ENCODE measurements at regions of chr21 and their contacts with region 1.

Region 1: DNA sequence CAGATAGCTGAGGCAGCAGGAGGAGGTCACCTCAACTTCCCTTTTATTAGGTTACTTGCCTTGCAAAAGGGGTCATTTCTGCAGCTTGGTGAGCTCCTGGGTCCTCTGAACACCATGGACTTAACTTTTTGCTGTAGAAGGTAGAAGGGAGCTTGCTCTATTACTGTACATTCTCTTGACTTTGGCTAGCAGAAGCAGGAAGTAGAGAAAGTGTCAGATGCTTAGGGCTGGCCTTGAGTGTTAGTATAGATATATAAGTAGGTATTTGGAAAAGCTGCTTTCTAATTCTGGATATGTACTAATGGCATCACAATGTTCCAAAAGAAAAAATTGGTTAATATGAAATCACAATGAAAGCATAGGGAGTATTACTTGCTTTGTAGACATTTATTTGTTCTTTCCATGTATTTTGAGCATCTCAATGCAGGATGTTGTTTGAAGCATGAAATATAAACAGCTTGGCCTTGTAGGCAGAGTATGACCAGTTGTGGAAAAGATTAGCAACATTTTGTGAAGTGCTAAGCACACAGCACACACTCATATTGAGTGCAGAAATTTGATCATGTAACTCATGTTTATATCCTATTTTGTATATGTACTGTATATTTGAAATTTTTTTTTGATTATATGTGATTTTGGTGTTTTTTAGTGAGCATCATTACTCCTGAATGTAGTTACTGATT is 108.8 kb downstream of the DYRK1A start:
- DNase-seq: no peak
- ATAC-seq: peak; percentile 45 to 74 (median 65)
- H3K4me3 ChIP-seq: no peak overlapping the region
- H3K4me3 Mint-ChIP-seq: peak overlapping the region in 1 of 3 donors; percentile 25
- H3K27ac ChIP-seq: peak overlapping the region; percentile 26
- H3K27ac Mint-ChIP-seq: peak overlapping the region; percentile 5 to 71
- H3K4me1 ChIP-seq: peaks cover 11 to 19% of the 10 kb centered on the region in 2 experiments
- H3K4me1 Mint-ChIP-seq: peaks cover 69 to 75% (median 74%) of the 10 kb centered on the region in 3 donors
- H3K27me3 ChIP-seq: no peaks in the 10 kb centered on the region
- H3K27me3 Mint-ChIP-seq: no peaks in the 10 kb centered on the region

Region 2: GRCh38 chr21:37407719-37408420 is 67.5 kb before region 1 on chr21:
- CTCF ChIA-PET with region 1: no interaction called
- POLR2A ChIA-PET with region 1: interaction called in 1 of 2 experiments, 20 read pairs
- DNase-seq: no peak
- ATAC-seq: peak in 1 of 4 experiments; percentile 32
- H3K4me3 ChIP-seq: no peak overlapping the region
- H3K4me3 Mint-ChIP-seq: peak overlapping the region; percentile 5 to 46 (median 31)
- H3K27ac ChIP-seq: peak overlapping the region; percentile 11
- H3K27ac Mint-ChIP-seq: peak overlapping the region; percentile 44 to 52
- H3K4me1 ChIP-seq: peaks cover 15 to 40% of the 10 kb centered on the region in 2 experiments
- H3K4me1 Mint-ChIP-seq: peaks cover 86 to 93% (median 89%) of the 10 kb centered on the region in 3 donors
- H3K27me3 ChIP-seq: no peaks in the 10 kb centered on the region
- H3K27me3 Mint-ChIP-seq: no peaks in the 10 kb centered on the region

Region 3: GRCh38 chr21:37463083-37463801 is 12.1 kb before region 1 on chr21:
- CTCF ChIA-PET with region 1: interaction called in 1 of 2 experiments, 10 read pairs
- POLR2A ChIA-PET with region 1: no interaction called
- DNase-seq: peak in 8 of 35 experiments; percentile 11 to 58 (median 18)
- ATAC-seq: peak; percentile 36 to 62 (median 44)
- H3K4me3 ChIP-seq: no peak overlapping the region
- H3K4me3 Mint-ChIP-seq: peak overlapping the region in 2 of 3 donors; percentile 11 to 46
- H3K27ac ChIP-seq: peak overlapping the region; percentile 65
- H3K27ac Mint-ChIP-seq: peak overlapping the region; percentile 58 to 70
- H3K4me1 ChIP-seq: peaks cover 27 to 31% of the 10 kb centered on the region in 2 experiments
- H3K4me1 Mint-ChIP-seq: peaks cover 82 to 89% (median 87%) of the 10 kb centered on the region in 3 donors
- H3K27me3 ChIP-seq: no peaks in the 10 kb centered on the region
- H3K27me3 Mint-ChIP-seq: no peaks in the 10 kb centered on the region

Measured in T-cell (primary cell).